CD4-positive, alpha-beta memory T cell (primary cell): ENCODE measurements at regions of chr5 and their contacts with region 1.

Region 1: DNA sequence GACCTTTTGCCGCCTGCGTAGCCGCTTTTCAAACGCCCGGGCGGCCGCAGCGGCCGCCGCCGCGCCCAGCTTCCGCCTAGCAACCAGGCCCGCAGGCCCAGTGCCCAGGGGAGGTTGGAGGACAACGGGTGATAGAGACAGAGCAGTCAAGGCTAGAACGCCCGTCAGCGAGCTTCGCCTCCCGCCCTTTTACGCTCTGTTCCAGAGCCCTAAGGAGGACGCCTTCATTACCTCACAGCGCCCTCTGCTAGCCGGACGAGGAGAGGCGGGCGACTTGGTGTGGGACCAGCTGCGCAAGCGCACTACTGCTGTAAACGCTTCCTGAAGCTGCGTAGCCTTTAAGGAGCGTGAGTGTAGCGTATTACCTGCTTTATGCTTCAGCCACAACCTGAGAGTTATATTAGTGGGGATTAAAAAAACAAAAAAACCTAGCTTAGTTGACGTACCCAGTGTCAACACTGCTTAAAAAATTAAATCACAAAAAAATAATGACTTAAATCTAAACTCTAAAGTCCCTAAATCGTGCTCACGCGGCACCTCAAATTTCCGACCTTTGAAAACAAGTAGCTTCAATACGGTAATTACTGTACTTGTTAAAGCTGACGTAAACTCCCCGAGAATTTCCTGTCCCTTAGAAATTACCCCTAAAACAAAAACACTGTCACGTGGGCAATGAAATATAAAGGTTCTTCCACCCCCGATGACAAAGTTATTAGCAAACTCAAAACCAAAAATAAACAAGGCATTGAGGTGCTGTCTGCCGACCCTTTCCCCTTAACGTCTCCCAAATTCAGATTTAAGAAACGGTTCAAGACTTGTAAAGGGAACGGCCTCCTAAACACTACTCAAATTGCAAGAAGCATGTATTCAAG is at the start of gene CEP120:
- DNase-seq: peak; percentile 96 to 99 (median 98)
- H3K4me3 ChIP-seq: peak within 1 kb of the TSS; percentile 71 to 77
- H3K4me3 Mint-ChIP-seq: peak within 1 kb of the TSS in 1 of 8 donors; percentile 33
- H3K27ac ChIP-seq: peak within 1 kb of the TSS; percentile 91
- H3K27ac Mint-ChIP-seq: peak within 1 kb of the TSS in 2 of 7 donors; percentile 99
- H3K4me1 ChIP-seq: peaks cover 37% of the 10 kb centered on the region
- H3K4me1 Mint-ChIP-seq: peaks cover 15 to 23% (median 20%) of the 10 kb centered on the region in 4 donors
- H3K27me3 ChIP-seq: no peaks in the 10 kb centered on the region
- H3K27me3 Mint-ChIP-seq: no peaks in the 10 kb centered on the region
- total RNA-seq, gene CEP120: 70.0 to 70.1 TPM

Region 2: GRCh38 chr5:122845229-122846050 is 578.1 kb before region 1 on chr5 and contains the start of gene SNX24:
- CTCF ChIA-PET with region 1: interaction called, 5 read pairs
- POLR2A ChIA-PET with region 1: interaction called, 22 read pairs
- intact Hi-C with region 1: loop called (anchors 5 kb)
- DNase-seq: peak; percentile 72 to 81 (median 77)
- H3K4me3 ChIP-seq: peak within 1 kb of the TSS; percentile 79 to 96
- H3K4me3 Mint-ChIP-seq: peak within 1 kb of the TSS; percentile 90 to 94 (median 94)
- H3K27ac ChIP-seq: peak within 1 kb of the TSS; percentile 68
- H3K27ac Mint-ChIP-seq: peak within 1 kb of the TSS; percentile 87 to 95 (median 94)
- H3K4me1 ChIP-seq: peaks cover 25% of the 10 kb centered on the region
- H3K4me1 Mint-ChIP-seq: peaks cover 26 to 42% (median 35%) of the 10 kb centered on the region in 4 donors
- H3K27me3 ChIP-seq: no peaks in the 10 kb centered on the region
- H3K27me3 Mint-ChIP-seq: no peaks in the 10 kb centered on the region
- total RNA-seq, gene SNX24: 4.4 to 7.2 TPM

Region 3: GRCh38 chr5:123066016-123066415 is 357.5 kb before region 1 on chr5:
- CTCF ChIA-PET with region 1: no interaction called
- POLR2A ChIA-PET with region 1: no interaction called
- intact Hi-C with region 1: no loop called
- DNase-seq: no peak
- H3K4me3 ChIP-seq: no peak overlapping the region
- H3K4me3 Mint-ChIP-seq: no peak overlapping the region
- H3K27ac ChIP-seq: no peak overlapping the region
- H3K27ac Mint-ChIP-seq: no peak overlapping the region
- H3K4me1 ChIP-seq: no peaks in the 10 kb centered on the region
- H3K4me1 Mint-ChIP-seq: no peaks in the 10 kb centered on the region
- H3K27me3 ChIP-seq: no peaks in the 10 kb centered on the region
- H3K27me3 Mint-ChIP-seq: peaks cover 5 to 10% of the 10 kb centered on the region in 2 donors

Region 4: DNA sequence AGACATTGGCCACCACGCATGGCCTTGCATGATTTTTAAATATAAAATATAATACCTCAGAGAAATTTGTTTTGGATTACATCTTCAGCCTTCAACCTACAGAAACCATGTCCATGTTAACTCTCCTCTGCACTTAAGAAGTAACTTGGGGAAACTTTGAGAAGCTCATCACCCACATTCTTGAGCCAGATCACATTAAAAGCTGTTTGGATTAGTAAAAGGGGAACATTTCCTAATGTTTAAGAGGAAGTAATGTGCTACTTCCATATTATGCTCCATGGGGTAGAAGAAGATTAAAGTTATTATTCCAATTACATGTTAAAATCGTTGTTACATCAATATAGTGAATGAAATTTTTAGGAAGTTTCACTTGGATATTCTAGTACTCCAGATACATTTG is 10.1 kb after region 1 on chr5:
- CTCF ChIA-PET with region 1: interaction called, 9 read pairs
- POLR2A ChIA-PET with region 1: interaction called, 10 read pairs
- intact Hi-C with region 1: no loop called
- DNase-seq: no peak
- H3K4me3 ChIP-seq: no peak overlapping the region
- H3K4me3 Mint-ChIP-seq: no peak overlapping the region
- H3K27ac ChIP-seq: no peak overlapping the region
- H3K27ac Mint-ChIP-seq: no peak overlapping the region
- H3K4me1 ChIP-seq: no peaks in the 10 kb centered on the region
- H3K4me1 Mint-ChIP-seq: peaks cover 0 to 4% (median 0%) of the 10 kb centered on the region in 4 donors
- H3K27me3 ChIP-seq: no peaks in the 10 kb centered on the region
- H3K27me3 Mint-ChIP-seq: peaks cover 0 to 3% of the 10 kb centered on the region in 2 donors

Region 5: GRCh38 chr5:123518111-123518510 is 94.6 kb after region 1 on chr5:
- CTCF ChIA-PET with region 1: interaction called, 20 read pairs
- POLR2A ChIA-PET with region 1: interaction called, 181 read pairs
- intact Hi-C with region 1: no loop called
- DNase-seq: no peak
- H3K4me3 ChIP-seq: no peak overlapping the region
- H3K4me3 Mint-ChIP-seq: peak overlapping the region in 3 of 8 donors; percentile 7 to 34 (median 8)
- H3K27ac ChIP-seq: no peak overlapping the region
- H3K27ac Mint-ChIP-seq: peak overlapping the region in 1 of 7 donors; percentile 23
- H3K4me1 ChIP-seq: peaks cover 48% of the 10 kb centered on the region
- H3K4me1 Mint-ChIP-seq: peaks cover 33 to 64% (median 48%) of the 10 kb centered on the region in 4 donors
- H3K27me3 ChIP-seq: no peaks in the 10 kb centered on the region
- H3K27me3 Mint-ChIP-seq: no peaks in the 10 kb centered on the region

Region 6: GRCh38 chr5:123605822-123606221 is 182.3 kb after region 1 on chr5:
- CTCF ChIA-PET with region 1: interaction called, 30 read pairs
- POLR2A ChIA-PET with region 1: interaction called, 36 read pairs
- intact Hi-C with region 1: loop called (anchors 1 kb)
- DNase-seq: no peak
- H3K4me3 ChIP-seq: no peak overlapping the region
- H3K4me3 Mint-ChIP-seq: no peak overlapping the region
- H3K27ac ChIP-seq: no peak overlapping the region
- H3K27ac Mint-ChIP-seq: no peak overlapping the region
- H3K4me1 ChIP-seq: no peaks in the 10 kb centered on the region
- H3K4me1 Mint-ChIP-seq: peaks cover 0 to 5% (median 2%) of the 10 kb centered on the region in 4 donors
- H3K27me3 ChIP-seq: no peaks in the 10 kb centered on the region
- H3K27me3 Mint-ChIP-seq: no peaks in the 10 kb centered on the region

Region 7: DNA sequence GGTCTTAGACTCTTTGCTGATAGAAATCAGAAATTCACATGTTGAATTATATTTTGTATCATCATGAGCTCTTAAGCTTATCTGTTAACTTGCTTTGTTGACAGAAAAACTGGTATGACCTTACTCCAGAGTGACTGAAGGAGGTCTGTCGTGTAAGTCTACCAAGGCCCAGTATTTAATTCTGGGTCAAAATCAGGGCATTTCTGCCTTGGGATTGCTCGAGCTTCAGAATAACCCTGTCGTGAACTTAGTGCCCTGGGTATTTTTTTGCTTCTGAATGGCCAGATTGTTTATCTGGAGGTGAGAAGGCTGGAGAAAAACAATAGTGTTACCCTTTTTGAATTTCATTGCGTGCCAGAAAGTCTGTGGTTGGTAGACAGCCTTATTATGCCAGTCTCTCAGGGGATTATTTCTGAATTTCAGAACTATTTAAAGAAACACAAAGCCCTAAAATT is 411.8 kb after region 1 on chr5:
- CTCF ChIA-PET with region 1: no interaction called
- POLR2A ChIA-PET with region 1: no interaction called
- intact Hi-C with region 1: no loop called
- DNase-seq: no peak
- H3K4me3 ChIP-seq: no peak overlapping the region
- H3K4me3 Mint-ChIP-seq: no peak overlapping the region
- H3K27ac ChIP-seq: no peak overlapping the region
- H3K27ac Mint-ChIP-seq: no peak overlapping the region
- H3K4me1 ChIP-seq: no peaks in the 10 kb centered on the region
- H3K4me1 Mint-ChIP-seq: no peaks in the 10 kb centered on the region
- H3K27me3 ChIP-seq: no peaks in the 10 kb centered on the region
- H3K27me3 Mint-ChIP-seq: no peaks in the 10 kb centered on the region